CD4-positive, alpha-beta memory T cell (primary cell): ENCODE measurements at regions of chr3 and their contacts with region 1.

Region 1: GRCh38 chr3:124559881-124560574 is 170.2 kb upstream of the UMPS start:
- DNase-seq: peak; percentile 34 to 51 (median 47)
- H3K4me3 ChIP-seq: no peak overlapping the region
- H3K4me3 Mint-ChIP-seq: no peak overlapping the region
- H3K27ac ChIP-seq: no peak overlapping the region
- H3K27ac Mint-ChIP-seq: no peak overlapping the region
- H3K4me1 ChIP-seq: no peaks in the 10 kb centered on the region
- H3K4me1 Mint-ChIP-seq: peaks cover 0 to 1% (median 0%) of the 10 kb centered on the region in 4 donors
- H3K27me3 ChIP-seq: peaks cover under 1% of the 10 kb centered on the region
- H3K27me3 Mint-ChIP-seq: peaks cover 18 to 45% of the 10 kb centered on the region in 2 donors

Region 2: GRCh38 chr3:123941121-123941520 is 618.9 kb before region 1 on chr3:
- CTCF ChIA-PET with region 1: no interaction called
- POLR2A ChIA-PET with region 1: no interaction called
- intact Hi-C with region 1: loop called (anchors 10 kb)
- DNase-seq: no peak
- H3K4me3 ChIP-seq: no peak overlapping the region
- H3K4me3 Mint-ChIP-seq: no peak overlapping the region
- H3K27ac ChIP-seq: no peak overlapping the region
- H3K27ac Mint-ChIP-seq: no peak overlapping the region
- H3K4me1 ChIP-seq: no peaks in the 10 kb centered on the region
- H3K4me1 Mint-ChIP-seq: no peaks in the 10 kb centered on the region
- H3K27me3 ChIP-seq: no peaks in the 10 kb centered on the region
- H3K27me3 Mint-ChIP-seq: no peaks in the 10 kb centered on the region

Region 3: GRCh38 chr3:124131580-124131979 is 428.4 kb before region 1 on chr3:
- CTCF ChIA-PET with region 1: no interaction called
- POLR2A ChIA-PET with region 1: no interaction called
- intact Hi-C with region 1: no loop called
- DNase-seq: no peak
- H3K4me3 ChIP-seq: no peak overlapping the region
- H3K4me3 Mint-ChIP-seq: no peak overlapping the region
- H3K27ac ChIP-seq: no peak overlapping the region
- H3K27ac Mint-ChIP-seq: no peak overlapping the region
- H3K4me1 ChIP-seq: no peaks in the 10 kb centered on the region
- H3K4me1 Mint-ChIP-seq: no peaks in the 10 kb centered on the region
- H3K27me3 ChIP-seq: no peaks in the 10 kb centered on the region
- H3K27me3 Mint-ChIP-seq: peaks cover 5 to 12% of the 10 kb centered on the region in 2 donors

Region 4: GRCh38 chr3:124456506-124456905 is 103.5 kb before region 1 on chr3:
- CTCF ChIA-PET with region 1: no interaction called
- POLR2A ChIA-PET with region 1: no interaction called
- intact Hi-C with region 1: no loop called
- DNase-seq: no peak
- H3K4me3 ChIP-seq: no peak overlapping the region
- H3K4me3 Mint-ChIP-seq: no peak overlapping the region
- H3K27ac ChIP-seq: no peak overlapping the region
- H3K27ac Mint-ChIP-seq: no peak overlapping the region
- H3K4me1 ChIP-seq: no peaks in the 10 kb centered on the region
- H3K4me1 Mint-ChIP-seq: no peaks in the 10 kb centered on the region
- H3K27me3 ChIP-seq: no peaks in the 10 kb centered on the region
- H3K27me3 Mint-ChIP-seq: peaks cover 11 to 26% of the 10 kb centered on the region in 2 donors

Region 5: GRCh38 chr3:124584552-124585391 is 24.7 kb after region 1 on chr3:
- CTCF ChIA-PET with region 1: interaction called, 16 read pairs
- POLR2A ChIA-PET with region 1: no interaction called
- intact Hi-C with region 1: loop called (anchors 2 kb)
- DNase-seq: peak in 4 of 5 donors; percentile 36 to 49 (median 43)
- H3K4me3 ChIP-seq: peak overlapping the region; percentile 52 to 58
- H3K4me3 Mint-ChIP-seq: peak overlapping the region; percentile 87 to 92 (median 90)
- H3K27ac ChIP-seq: no peak overlapping the region
- H3K27ac Mint-ChIP-seq: peak overlapping the region; percentile 74 to 91 (median 82)
- H3K4me1 ChIP-seq: peaks cover 36% of the 10 kb centered on the region
- H3K4me1 Mint-ChIP-seq: peaks cover 17 to 41% (median 29%) of the 10 kb centered on the region in 4 donors
- H3K27me3 ChIP-seq: no peaks in the 10 kb centered on the region
- H3K27me3 Mint-ChIP-seq: peaks cover 5 to 16% of the 10 kb centered on the region in 2 donors

Region 6: DNA sequence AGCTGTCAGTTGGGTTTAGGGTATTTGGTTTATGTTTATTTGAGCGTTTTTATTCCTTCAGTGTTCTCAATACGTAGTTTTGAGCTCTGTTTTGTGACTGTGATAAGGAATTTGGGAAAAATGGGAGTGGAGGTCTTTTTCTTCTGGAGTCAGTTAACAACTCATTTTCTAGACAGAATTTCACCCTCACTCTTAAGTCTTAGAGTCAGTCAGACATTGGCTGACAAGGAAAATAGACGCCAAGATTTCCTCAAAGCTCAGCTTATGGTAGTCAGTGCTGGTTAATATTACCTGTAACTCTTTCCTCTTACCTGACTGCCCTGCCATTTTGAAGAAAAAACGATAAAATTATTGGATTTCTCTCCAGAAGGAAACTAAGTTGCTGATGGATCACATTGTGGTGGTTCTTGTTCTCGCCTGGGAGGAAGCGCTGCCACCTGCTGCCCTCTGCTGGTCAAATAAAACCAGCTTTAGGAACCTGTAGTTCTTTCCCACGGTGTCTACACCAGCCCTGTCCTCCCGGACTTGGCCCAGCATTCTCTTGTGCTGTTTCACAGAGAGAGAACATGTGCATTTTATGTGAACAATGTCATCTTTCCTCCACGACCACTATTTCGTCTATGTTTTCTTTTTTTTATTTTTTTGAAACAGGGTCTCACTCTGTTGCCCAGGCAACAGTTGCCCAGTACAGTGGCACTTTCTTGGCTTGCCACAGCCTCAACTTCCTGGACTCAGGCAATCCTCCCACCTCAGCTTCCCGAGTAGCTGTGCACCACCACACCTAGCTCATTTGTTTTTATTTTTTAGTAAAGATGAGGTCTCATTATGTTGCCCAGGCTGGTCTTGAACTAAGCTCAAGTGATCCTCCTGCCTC is 128.8 kb after region 1 on chr3:
- CTCF ChIA-PET with region 1: interaction called, 264 read pairs
- POLR2A ChIA-PET with region 1: interaction called, 4 read pairs
- intact Hi-C with region 1: loop called (anchors 1 kb)
- DNase-seq: peak; percentile 57 to 70 (median 63)
- H3K4me3 ChIP-seq: no peak overlapping the region
- H3K4me3 Mint-ChIP-seq: no peak overlapping the region
- H3K27ac ChIP-seq: no peak overlapping the region
- H3K27ac Mint-ChIP-seq: no peak overlapping the region
- H3K4me1 ChIP-seq: peaks cover 3% of the 10 kb centered on the region
- H3K4me1 Mint-ChIP-seq: peaks cover 0 to 6% (median 3%) of the 10 kb centered on the region in 4 donors
- H3K27me3 ChIP-seq: no peaks in the 10 kb centered on the region
- H3K27me3 Mint-ChIP-seq: peaks cover 8 to 20% of the 10 kb centered on the region in 2 donors

Region 7: DNA sequence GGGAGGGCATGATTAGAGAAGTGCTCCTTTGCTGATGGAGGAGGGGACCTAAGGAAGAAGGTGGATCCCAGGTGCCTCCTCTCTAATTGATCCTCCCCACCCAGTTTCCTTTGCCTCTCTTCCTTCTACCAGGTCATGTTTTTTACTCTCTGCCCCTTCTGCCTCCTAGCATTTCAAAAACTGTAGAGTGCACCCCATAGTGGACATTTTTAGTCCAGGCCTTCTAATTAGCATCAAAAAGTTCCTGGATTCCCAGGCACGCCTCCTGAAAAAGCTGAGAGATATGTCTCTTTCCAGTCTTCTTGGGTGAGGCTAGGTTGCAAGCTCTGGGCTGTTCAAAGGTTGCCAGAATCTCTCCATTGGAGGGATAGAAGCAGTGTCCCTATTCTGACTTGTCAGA is 345.8 kb after region 1 on chr3:
- CTCF ChIA-PET with region 1: no interaction called
- POLR2A ChIA-PET with region 1: no interaction called
- intact Hi-C with region 1: loop called (anchors 5 kb)
- DNase-seq: no peak
- H3K4me3 ChIP-seq: no peak overlapping the region
- H3K4me3 Mint-ChIP-seq: no peak overlapping the region
- H3K27ac ChIP-seq: no peak overlapping the region
- H3K27ac Mint-ChIP-seq: peak overlapping the region in 1 of 7 donors; percentile 47
- H3K4me1 ChIP-seq: no peaks in the 10 kb centered on the region
- H3K4me1 Mint-ChIP-seq: peaks cover 1 to 6% (median 3%) of the 10 kb centered on the region in 4 donors
- H3K27me3 ChIP-seq: peaks cover 4% of the 10 kb centered on the region
- H3K27me3 Mint-ChIP-seq: peaks cover 7 to 13% of the 10 kb centered on the region in 2 donors